A673 (cell line): ENCODE measurements at regions of chr16 and their contacts with region 1.

Region 1: DNA sequence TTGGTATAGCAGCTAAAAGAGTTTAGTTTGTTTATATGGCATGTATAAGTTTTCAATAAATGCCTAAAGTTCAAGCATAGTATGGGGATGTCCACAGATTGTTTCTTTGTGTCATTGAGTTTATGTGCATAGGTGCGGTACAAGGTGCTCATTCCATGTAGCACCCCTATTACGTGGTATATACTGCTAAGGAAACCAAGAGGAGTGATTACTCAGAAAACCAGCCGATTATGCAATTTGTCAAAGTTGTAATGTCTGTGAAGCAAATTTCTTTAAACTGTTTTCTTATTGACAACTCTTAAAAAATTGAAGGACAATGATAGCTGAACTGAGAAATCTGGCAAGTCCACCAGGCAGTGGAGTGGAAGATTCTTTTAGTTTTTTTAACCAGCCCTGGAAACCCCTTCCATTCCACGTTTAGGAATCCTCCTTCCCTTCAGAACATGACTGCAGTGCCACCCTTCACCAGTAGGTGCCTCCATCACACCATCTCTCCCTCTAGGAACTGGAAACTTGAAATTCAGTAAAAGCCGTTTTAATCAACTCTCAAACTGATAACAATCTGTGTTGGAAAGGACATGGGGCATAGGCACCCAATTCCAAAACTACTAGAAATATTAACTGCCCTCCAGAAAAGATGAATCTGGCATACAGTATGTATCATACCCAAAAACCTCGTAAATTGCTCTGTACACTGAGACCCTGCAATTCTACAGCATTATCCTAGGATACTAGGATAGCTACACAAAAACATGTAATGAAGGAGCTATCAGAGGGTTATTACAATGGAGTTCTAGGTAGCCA is 43.5 kb downstream of the REXO5 start:
- DNase-seq: peak; percentile 73
- H3K4me3 ChIP-seq: no peak overlapping the region
- H3K27ac ChIP-seq: no peak overlapping the region
- H3K4me1 ChIP-seq: no peaks in the 10 kb centered on the region
- H3K27me3 ChIP-seq: no peaks in the 10 kb centered on the region
- CTCF ChIP-seq: peak; percentile 96

Region 2: GRCh38 chr16:20409398-20410120 is 440.2 kb before region 1 on chr16 and contains the start of gene ACSM5:
- CTCF ChIA-PET with region 1: no interaction called
- POLR2A ChIA-PET with region 1: no interaction called
- intact Hi-C with region 1: no loop called
- DNase-seq: no peak
- H3K4me3 ChIP-seq: no peak within 1 kb of the TSS
- H3K27ac ChIP-seq: no peak within 1 kb of the TSS
- H3K4me1 ChIP-seq: no peaks in the 10 kb centered on the region
- H3K27me3 ChIP-seq: no peaks in the 10 kb centered on the region
- CTCF ChIP-seq: no peak
- total RNA-seq, gene ACSM5: not detected in 2 replicates

Region 3: DNA sequence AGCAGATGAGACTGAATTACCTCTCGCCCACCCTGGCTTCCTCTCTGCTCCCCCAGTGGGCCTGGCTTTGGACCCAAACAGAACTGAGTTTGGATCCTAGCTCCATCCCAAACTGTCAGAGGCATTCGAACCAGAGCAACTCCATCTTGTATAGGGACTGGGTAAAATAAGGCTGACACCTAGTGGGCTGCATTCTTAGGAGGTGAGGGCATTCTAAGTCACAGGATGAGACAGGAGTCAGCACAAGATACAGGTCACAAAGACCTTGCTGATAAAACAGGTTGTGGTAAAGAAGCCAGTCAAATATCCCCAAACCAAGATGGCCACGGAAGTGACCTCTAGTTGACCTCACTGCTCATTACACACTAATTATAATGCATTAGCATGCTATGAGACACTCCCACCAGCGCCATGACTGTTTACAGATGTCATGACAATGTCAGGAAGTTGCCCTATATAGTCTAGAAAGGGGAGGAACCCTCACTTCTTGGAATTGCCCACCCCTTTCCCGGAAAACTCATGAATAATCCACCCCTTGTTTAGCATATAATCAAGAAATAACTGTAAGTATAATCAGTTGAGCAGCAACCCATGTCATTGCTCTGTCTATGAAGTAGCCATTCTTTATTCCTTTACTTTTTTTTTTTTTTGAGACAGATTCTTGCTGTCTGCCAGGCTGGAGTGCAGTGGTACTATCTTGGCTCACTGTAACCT is 95.2 kb after region 1 on chr16:
- CTCF ChIA-PET with region 1: interaction called, 4 read pairs
- POLR2A ChIA-PET with region 1: no interaction called
- intact Hi-C with region 1: loop called (anchors 10 kb)
- DNase-seq: peak; percentile 36
- H3K4me3 ChIP-seq: no peak overlapping the region
- H3K27ac ChIP-seq: no peak overlapping the region
- H3K4me1 ChIP-seq: no peaks in the 10 kb centered on the region
- H3K27me3 ChIP-seq: no peaks in the 10 kb centered on the region
- CTCF ChIP-seq: peak; percentile 27; the same call in 1 of the 2 replicates

Region 4: GRCh38 chr16:21001262-21001661 is 151.5 kb after region 1 on chr16:
- CTCF ChIA-PET with region 1: no interaction called
- POLR2A ChIA-PET with region 1: no interaction called
- intact Hi-C with region 1: loop called (anchors 5 kb)
- DNase-seq: peak; percentile 39
- H3K4me3 ChIP-seq: no peak overlapping the region
- H3K27ac ChIP-seq: no peak overlapping the region
- H3K4me1 ChIP-seq: no peaks in the 10 kb centered on the region
- H3K27me3 ChIP-seq: no peaks in the 10 kb centered on the region
- CTCF ChIP-seq: peak; percentile 79

Region 5: GRCh38 chr16:21083729-21084268 is 234.0 kb after region 1 on chr16:
- CTCF ChIA-PET with region 1: interaction called, 5 read pairs
- POLR2A ChIA-PET with region 1: no interaction called
- intact Hi-C with region 1: loop called (anchors 1 kb)
- DNase-seq: peak; percentile 59
- H3K4me3 ChIP-seq: no peak overlapping the region
- H3K27ac ChIP-seq: no peak overlapping the region
- H3K4me1 ChIP-seq: no peaks in the 10 kb centered on the region
- H3K27me3 ChIP-seq: no peaks in the 10 kb centered on the region
- CTCF ChIP-seq: peak; percentile 76

Region 6: GRCh38 chr16:21145738-21146137 is 295.9 kb after region 1 on chr16:
- CTCF ChIA-PET with region 1: no interaction called
- POLR2A ChIA-PET with region 1: no interaction called
- intact Hi-C with region 1: loop called (anchors 5 kb)
- DNase-seq: no peak
- H3K4me3 ChIP-seq: no peak overlapping the region
- H3K27ac ChIP-seq: no peak overlapping the region
- H3K4me1 ChIP-seq: no peaks in the 10 kb centered on the region
- H3K27me3 ChIP-seq: no peaks in the 10 kb centered on the region
- CTCF ChIP-seq: no peak

Region 7: DNA sequence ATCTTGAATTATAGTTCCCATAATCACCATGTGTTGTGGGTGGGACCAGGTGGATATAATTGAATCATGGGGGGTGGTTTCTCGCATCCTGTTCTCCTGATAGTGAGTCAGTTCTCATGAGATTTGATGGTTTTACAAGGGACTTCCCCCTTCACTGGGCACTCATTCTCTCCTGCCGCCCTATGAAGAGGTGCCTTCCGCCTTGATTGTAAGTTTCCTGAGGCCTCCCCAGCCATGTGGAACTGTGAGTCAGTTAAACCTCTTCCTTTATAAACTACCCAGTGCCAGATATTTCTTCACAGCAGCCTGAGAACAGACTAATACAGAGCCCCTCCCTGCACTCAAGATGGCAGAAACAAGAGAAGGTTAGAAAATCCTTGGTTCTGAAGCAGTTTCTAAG is 335.0 kb after region 1 on chr16:
- CTCF ChIA-PET with region 1: no interaction called
- POLR2A ChIA-PET with region 1: interaction called, 19 read pairs
- intact Hi-C with region 1: no loop called
- DNase-seq: no peak
- H3K4me3 ChIP-seq: no peak overlapping the region
- H3K27ac ChIP-seq: no peak overlapping the region
- H3K4me1 ChIP-seq: no peaks in the 10 kb centered on the region
- H3K27me3 ChIP-seq: no peaks in the 10 kb centered on the region
- CTCF ChIP-seq: no peak